IMR-90 (cell line): ENCODE measurements at regions of chr4 and their contacts with region 1.

Region 1: DNA sequence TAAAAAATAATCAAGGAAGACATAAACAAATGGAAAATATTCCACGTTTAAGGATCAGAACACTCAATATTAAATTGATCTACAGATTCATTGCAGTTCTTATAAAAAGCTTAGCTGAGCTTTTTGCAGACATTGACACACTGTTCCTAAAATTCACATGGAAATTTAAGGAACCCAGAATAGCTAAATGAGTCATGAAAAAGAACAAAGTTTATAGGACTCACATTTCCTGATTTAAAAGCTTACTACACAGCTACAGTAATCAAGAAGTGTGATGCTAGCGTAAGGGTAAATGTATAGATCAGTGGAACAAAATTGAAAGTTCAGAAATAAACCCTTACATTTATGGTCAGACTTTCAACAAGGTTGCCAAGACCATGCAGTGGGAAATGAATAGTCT is 33.1 kb downstream of the NSUN7 start:
- DNase-seq: no peak
- ATAC-seq: no peak
- H3K4me3 ChIP-seq: no peak overlapping the region
- H3K27ac ChIP-seq: no peak overlapping the region
- H3K4me1 ChIP-seq: no peaks in the 10 kb centered on the region
- H3K27me3 ChIP-seq: peaks cover 4% of the 10 kb centered on the region
- CTCF ChIP-seq: no peak
- POLR2A ChIP-seq: no peak
- RAD21 ChIP-seq: no peak

Region 2: DNA sequence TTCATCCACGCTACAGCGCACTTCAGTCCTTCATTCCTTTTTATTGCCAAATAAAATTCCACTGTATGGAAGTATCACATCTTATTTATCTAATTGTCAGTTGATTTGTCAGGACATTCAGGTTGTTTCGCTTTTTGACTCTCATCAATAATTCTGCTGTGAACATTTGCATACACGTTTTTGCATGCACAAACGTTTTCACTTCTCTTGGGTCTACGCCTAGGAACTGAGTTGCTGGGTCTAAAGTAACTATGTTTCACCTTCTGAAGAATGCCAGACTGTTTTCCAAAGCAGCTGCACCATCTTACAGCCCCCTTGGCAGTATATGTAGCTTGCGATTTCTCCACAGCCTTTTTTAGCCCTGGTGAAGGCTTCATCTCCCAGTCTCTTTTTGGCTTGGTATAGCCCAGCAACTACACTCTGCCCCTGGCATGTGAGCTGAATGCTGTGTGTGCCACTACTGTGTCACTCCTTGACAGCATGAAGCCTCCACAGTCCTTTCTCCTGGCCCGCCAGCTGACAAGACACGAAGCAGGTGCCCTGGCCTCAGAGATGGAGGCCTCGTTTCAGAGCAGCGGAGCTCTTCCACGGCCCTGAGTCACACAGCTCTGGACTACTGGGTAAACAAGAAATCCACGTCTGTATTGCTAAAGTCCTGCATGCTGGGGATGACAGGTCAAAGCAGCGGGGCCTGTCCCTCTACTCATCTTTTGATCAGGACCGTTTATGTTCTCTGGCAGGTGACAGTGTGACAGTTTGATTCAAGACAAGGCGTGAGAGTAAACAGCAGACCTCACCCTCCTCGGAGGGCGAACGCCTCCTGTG is 42.4 kb after region 1 on chr4:
- CTCF ChIA-PET with region 1: no interaction called
- POLR2A ChIA-PET with region 1: no interaction called
- dilution Hi-C with region 1: no loop called
- in situ Hi-C with region 1: no loop called
- intact Hi-C with region 1: no loop called
- DNase-seq: no peak
- ATAC-seq: no peak
- H3K4me3 ChIP-seq: no peak overlapping the region
- H3K27ac ChIP-seq: no peak overlapping the region
- H3K4me1 ChIP-seq: no peaks in the 10 kb centered on the region
- H3K27me3 ChIP-seq: no peaks in the 10 kb centered on the region
- CTCF ChIP-seq: no peak
- POLR2A ChIP-seq: no peak
- RAD21 ChIP-seq: no peak

Region 3: GRCh38 chr4:41268721-41269517 is 486.0 kb after region 1 on chr4:
- CTCF ChIA-PET with region 1: no interaction called
- POLR2A ChIA-PET with region 1: interaction called, 10 read pairs
- dilution Hi-C with region 1: no loop called
- in situ Hi-C with region 1: no loop called
- intact Hi-C with region 1: no loop called
- DNase-seq: no peak
- ATAC-seq: peak; percentile 32; the same call in 1 of the 2 replicates
- H3K4me3 ChIP-seq: no peak overlapping the region
- H3K27ac ChIP-seq: no peak overlapping the region
- H3K4me1 ChIP-seq: no peaks in the 10 kb centered on the region
- H3K27me3 ChIP-seq: no peaks in the 10 kb centered on the region
- CTCF ChIP-seq: no peak
- POLR2A ChIP-seq: no peak
- RAD21 ChIP-seq: no peak